ENCODE measurements at regions of chr21 and their contacts with region 1.

Region 1: DNA sequence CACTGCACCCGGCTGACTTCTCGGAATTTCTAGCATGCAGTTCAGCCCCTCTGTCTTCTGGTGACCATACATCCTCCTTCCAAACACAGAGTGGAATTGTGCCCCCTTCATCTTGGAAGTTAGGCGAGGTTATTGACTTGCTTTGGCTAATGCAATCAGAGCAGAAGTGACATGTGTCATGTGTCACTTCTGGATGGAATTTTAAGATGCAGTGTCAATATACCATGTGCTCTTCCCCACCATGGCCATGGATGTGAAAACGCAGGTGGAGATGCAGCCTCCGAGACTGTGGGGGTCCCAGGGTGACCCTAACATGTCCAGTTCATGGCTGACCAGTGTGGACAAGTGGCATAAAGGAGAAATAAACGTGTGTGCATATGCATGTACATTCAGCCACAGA is 83.0 kb downstream of the KCNJ6 start:
- DNase-seq: no peak
- H3K4me3 ChIP-seq: no peak overlapping the region
- H3K27ac ChIP-seq: no peak overlapping the region
- H3K4me1 ChIP-seq: no peaks in the 10 kb centered on the region
- H3K27me3 ChIP-seq: peaks cover 0 to 16% of the 10 kb centered on the region in 2 donors
- CTCF ChIP-seq: no peak
- POLR2A ChIP-seq: no peak

Region 2: DNA sequence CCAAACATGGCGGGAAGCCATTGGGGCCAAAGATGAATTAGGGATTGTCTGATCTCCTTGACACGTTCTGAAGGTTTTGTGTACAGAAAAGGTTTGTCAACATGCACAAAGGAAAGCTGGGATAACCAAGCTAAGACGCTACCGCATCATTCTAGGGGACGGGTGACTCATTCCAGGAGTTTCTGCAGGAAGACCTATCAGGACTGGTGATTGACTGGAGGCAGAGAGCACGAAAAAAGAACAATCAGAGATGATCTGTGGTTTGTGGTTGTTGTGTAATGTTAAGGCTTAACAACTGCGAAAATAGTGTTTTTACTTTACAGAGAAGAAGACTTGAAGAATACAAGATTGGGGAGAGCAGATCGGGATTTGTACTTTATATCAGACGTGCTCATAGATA is 687.2 kb after region 1 on chr21:
- intact Hi-C with region 1: loop called (anchors 5 kb)
- DNase-seq: no peak
- H3K4me3 ChIP-seq: no peak overlapping the region
- H3K27ac ChIP-seq: no peak overlapping the region
- H3K4me1 ChIP-seq: no peaks in the 10 kb centered on the region
- H3K27me3 ChIP-seq: peaks cover 0 to 10% of the 10 kb centered on the region in 2 donors
- CTCF ChIP-seq: no peak
- POLR2A ChIP-seq: no peak

Measured in breast epithelium (tissue), 4 donors.